ENCODE measurements at regions of chr6 and their contacts with region 1.

Region 1: DNA sequence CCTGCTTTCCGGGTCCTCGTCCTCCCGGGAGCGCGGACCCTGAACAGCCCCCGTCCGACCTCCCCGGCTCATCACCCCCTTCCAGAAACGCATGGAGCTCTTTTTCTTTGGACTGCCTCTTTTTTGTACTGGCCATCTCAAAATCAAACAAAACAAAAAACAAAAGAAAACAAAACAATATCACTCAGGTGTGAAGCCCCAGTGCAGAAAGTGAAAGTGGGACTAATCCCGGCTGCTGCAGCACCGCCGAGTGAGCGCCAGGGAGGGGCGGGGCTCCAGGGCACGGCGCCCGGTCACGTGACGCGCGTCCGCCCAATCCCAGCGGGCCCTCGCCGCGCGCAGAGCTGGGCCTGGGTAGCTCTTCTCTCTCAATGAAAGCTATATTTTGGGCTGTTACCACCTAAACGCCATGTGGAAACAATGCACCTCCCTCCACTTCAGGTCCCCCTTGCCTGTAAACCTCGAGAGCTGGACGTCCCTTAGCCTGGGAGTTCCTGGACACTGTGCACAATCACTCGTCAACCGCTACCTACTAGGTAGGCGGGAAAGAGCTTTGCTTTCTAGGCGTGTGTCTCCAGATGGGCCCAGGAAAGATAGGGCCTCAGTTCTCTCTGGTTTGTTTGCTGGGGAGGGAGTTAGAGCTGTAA is 93.7 kb upstream of the PRDM1 start:
- DNase-seq: peak; percentile 41 to 94 (median 60)

Region 2: GRCh38 chr6:105851113-105851580 is 141.3 kb before region 1 on chr6:
- intact Hi-C with region 1: no loop called
- DNase-seq: no peak

Region 3: GRCh38 chr6:106085984-106086813 is 93.8 kb after region 1 on chr6 and contains the start of gene PRDM1:
- intact Hi-C with region 1: loop called (anchors 5 kb)
- DNase-seq: peak; percentile 16 to 92 (median 40)

Measured in posterior cingulate gyrus (tissue), 11 donors.